Right lobe of liver (tissue), 6 donors: ENCODE measurements at regions of chr9 and their contacts with region 1.

Region 1: GRCh38 chr9:111375817-111376564 is 46.0 kb upstream of the OR2K2 start:
- DNase-seq: no peak
- ATAC-seq: no peak
- H3K4me3 ChIP-seq: no peak overlapping the region
- H3K27ac ChIP-seq: no peak overlapping the region
- H3K4me1 ChIP-seq: no peaks in the 10 kb centered on the region
- H3K27me3 ChIP-seq: no peaks in the 10 kb centered on the region
- CTCF ChIP-seq: no peak
- POLR2A ChIP-seq: no peak

Region 2: DNA sequence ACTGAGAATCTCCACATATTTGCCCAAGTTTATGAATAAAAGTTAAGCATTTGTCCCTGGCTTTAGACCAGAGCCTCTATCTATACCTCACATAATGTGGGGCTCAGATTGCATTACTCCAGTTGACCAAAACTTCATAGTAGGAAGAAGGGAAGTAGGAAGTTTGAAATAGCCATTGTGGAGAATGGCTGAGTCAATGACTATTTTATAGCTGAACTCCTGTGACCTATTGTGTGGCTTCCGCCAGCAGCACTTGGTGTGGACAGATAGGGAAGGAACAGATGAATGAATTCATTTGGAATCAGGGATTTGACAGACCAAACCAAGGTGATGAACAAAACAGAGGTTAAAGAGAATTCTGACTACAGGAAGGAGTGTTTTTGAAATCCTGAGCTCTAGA is 244.8 kb before region 1 on chr9:
- intact Hi-C with region 1: no loop called
- DNase-seq: no peak
- ATAC-seq: peak in 3 of 4 donors; percentile 37 to 56 (median 44)
- H3K4me3 ChIP-seq: no peak overlapping the region
- H3K27ac ChIP-seq: no peak overlapping the region
- H3K4me1 ChIP-seq: no peaks in the 10 kb centered on the region
- H3K27me3 ChIP-seq: no peaks in the 10 kb centered on the region
- CTCF ChIP-seq: no peak
- POLR2A ChIP-seq: no peak

Region 3: DNA sequence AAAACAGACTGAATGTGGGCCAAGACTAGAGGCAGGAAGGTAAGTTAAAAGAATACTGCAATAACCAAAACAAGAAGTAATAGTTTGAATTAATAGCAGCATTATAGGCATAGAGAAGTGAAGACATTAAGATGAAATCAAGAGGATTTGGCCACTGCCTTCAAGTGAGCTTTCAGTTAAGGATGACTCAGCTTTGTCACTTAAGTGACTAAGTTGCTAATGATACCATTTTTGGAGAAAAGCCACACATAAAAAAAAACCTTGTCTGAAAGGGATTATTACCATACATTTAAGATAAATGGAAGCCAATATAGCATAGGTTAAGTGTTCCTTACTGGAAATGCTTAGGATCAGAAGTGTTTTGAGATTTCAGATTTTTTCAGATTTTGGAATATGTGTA is 51.2 kb after region 1 on chr9:
- intact Hi-C with region 1: loop called in 1 of 2 experiments (anchors 10 kb)
- DNase-seq: no peak
- ATAC-seq: no peak
- H3K4me3 ChIP-seq: no peak overlapping the region
- H3K27ac ChIP-seq: no peak overlapping the region
- H3K4me1 ChIP-seq: peaks cover 0 to 5% (median 0%) of the 10 kb centered on the region in 4 donors
- H3K27me3 ChIP-seq: no peaks in the 10 kb centered on the region
- CTCF ChIP-seq: no peak
- POLR2A ChIP-seq: no peak